Left ventricle myocardium inferior (tissue), 1 donor: ENCODE measurements at regions of chr7 and their contacts with region 1.

Region 1: DNA sequence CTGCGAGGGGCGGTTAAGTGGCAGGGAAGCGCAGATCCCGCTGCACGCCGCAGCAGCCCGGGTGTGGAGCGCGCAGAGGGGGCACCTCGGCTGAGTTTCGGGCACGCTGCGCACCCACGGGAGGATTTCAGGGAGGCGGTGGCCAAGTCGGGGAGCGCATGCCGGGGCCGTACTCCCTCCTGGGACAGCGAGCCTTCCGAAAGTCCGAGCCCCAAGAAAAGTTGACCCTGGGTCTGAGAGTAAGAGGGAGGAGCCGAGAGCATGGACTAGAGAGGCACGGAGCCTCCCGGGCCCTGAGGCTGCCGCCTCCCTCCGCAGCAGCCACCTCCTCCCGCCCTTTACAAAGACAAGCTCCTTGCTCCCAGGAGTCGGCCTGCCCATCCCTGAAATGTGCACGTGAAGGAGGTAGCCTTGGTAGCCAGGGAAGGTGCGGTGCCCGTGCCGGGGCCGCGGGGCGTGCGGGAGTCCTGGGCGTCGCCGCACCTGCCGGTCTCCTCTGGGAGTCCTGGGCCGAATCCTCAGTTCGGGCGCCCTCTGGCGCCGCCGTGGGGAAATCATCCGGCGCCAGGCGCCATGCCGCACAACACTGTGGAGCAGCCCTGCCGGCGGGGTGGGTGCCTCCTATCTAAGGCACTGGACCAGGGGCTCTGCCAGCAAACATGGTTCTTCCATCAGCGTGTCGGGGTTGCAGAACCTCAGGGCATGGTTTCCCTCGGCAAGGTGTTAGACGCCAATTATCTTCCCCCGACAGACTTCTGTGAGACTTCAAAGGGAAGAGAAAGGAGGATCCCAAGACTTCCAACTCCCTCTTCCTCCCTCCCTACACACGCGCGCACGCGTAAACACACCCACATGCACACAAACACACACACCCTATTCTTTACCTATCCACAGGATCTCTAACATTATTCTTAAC is 104.0 kb downstream of the TRIL start:
- DNase-seq: peak; percentile 78
- H3K4me3 ChIP-seq: peak overlapping the region; percentile 74
- H3K27ac ChIP-seq: no peak overlapping the region
- H3K4me1 ChIP-seq: peaks cover 13% of the 10 kb centered on the region
- H3K27me3 ChIP-seq: peaks cover 14% of the 10 kb centered on the region
- CTCF ChIP-seq: peak; percentile 93

Region 2: GRCh38 chr7:28389504-28390395 is 464.3 kb before region 1 on chr7:
- intact Hi-C with region 1: loop called (anchors 2 kb)
- DNase-seq: no peak
- H3K4me3 ChIP-seq: peak overlapping the region; percentile 58
- H3K27ac ChIP-seq: no peak overlapping the region
- H3K4me1 ChIP-seq: peaks cover 5% of the 10 kb centered on the region
- H3K27me3 ChIP-seq: no peaks in the 10 kb centered on the region
- CTCF ChIP-seq: peak; percentile 89

Region 3: GRCh38 chr7:28564755-28565374 is 289.2 kb before region 1 on chr7:
- intact Hi-C with region 1: no loop called
- DNase-seq: no peak
- H3K4me3 ChIP-seq: no peak overlapping the region
- H3K27ac ChIP-seq: no peak overlapping the region
- H3K4me1 ChIP-seq: no peaks in the 10 kb centered on the region
- H3K27me3 ChIP-seq: no peaks in the 10 kb centered on the region
- CTCF ChIP-seq: no peak

Region 4: DNA sequence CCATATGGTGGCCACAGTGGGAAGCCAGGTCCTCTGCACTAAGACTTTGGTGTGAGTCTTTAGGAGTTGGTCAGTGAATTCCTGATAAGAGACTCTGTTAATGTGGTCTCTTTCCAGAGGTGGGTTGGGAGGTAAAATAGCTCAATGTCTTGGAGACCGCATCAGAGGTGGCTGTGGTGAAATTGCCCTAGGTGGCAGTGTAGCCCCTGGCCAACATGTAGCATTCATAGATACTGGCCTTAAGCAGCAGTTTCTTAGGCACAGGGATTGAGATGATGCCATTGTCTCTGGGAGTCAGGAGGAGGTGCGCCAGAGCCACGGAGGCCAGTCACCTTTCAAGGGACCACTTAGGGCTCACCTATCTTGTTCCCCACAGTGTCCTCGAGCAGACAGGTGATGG is 239.0 kb before region 1 on chr7:
- intact Hi-C with region 1: loop called (anchors 10 kb)
- DNase-seq: no peak
- H3K4me3 ChIP-seq: no peak overlapping the region
- H3K27ac ChIP-seq: no peak overlapping the region
- H3K4me1 ChIP-seq: peaks cover 15% of the 10 kb centered on the region
- H3K27me3 ChIP-seq: no peaks in the 10 kb centered on the region
- CTCF ChIP-seq: peak; percentile 46

Region 5: DNA sequence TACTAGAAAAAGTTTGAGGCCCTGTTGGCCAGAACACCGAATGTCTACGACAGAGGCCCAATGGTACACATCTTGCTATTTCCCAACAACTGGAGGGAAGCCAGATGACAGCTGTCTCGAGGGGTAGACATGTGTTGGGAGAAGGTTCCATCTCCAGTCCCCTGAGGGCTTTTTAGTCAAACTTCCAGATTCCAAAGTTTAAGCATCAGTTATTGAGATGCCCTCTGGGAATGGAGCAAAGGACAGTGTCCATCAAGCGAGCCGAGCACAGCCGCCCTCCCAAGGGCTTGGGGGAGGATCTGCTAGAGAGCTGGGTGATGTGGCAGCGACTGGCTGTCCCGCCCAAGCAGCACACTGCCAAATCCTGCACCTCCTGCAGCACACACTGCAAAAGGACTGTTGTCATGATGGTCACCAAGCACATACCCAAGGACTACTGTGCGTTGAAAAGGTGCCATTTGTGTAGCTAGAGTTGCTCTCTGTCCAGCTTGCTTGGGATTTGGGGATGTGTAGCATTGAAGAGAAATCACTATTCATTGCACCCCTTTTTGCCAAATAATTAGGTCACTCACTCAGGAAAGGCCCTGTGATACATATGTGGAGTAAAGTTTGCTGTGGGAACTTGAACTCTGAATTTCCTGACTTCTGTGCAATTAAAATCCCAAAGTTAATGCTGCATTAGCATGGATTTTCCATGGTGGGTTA is 60.6 kb before region 1 on chr7:
- intact Hi-C with region 1: no loop called
- DNase-seq: peak; percentile 35
- H3K4me3 ChIP-seq: no peak overlapping the region
- H3K27ac ChIP-seq: no peak overlapping the region
- H3K4me1 ChIP-seq: no peaks in the 10 kb centered on the region
- H3K27me3 ChIP-seq: no peaks in the 10 kb centered on the region
- CTCF ChIP-seq: no peak

Region 6: DNA sequence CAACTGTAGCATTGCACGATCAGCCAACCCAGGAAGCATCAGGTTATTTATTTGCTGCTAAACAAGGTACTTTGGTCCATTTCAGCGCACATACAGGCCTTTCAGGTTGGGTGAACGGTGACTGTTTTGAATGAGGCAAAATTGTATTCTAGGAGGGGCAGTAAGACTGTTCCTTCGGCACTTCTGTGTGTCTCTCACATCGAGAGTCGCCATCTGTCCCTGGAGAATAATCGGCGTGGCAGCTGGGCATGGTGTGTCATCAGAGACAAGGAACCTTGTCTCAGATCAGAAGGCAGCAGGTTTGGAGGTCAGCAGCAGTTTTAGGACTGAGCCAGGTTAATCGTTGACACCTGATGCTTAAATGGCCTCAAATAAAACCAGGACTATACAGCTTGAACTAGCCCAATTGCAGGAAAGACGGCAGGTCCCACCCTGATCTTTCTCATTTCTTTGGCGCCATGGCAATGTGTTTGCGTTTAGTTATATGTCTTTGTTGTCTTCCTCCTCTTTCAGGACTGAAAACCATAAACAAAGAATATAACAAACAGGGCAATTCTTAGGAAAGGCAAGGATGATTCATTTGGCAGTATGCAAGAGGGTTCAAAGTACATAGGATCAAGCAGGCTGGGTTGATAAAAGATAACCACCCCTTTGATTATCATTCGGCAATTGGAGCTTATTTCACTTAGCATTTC is 617.5 kb after region 1 on chr7:
- intact Hi-C with region 1: no loop called
- DNase-seq: no peak
- H3K4me3 ChIP-seq: no peak overlapping the region
- H3K27ac ChIP-seq: no peak overlapping the region
- H3K4me1 ChIP-seq: peaks cover 34% of the 10 kb centered on the region
- H3K27me3 ChIP-seq: no peaks in the 10 kb centered on the region
- CTCF ChIP-seq: no peak